ENCODE measurements at regions of chr2 and their contacts with region 1.

Region 1: GRCh38 chr2:230602562-230603230 is 109.9 kb upstream of the CAB39 start:
- DNase-seq: no peak
- ATAC-seq: no peak
- H3K4me3 ChIP-seq: no peak overlapping the region
- H3K27ac ChIP-seq: no peak overlapping the region
- H3K4me1 ChIP-seq: no peaks in the 10 kb centered on the region
- H3K27me3 ChIP-seq: no peaks in the 10 kb centered on the region
- CTCF ChIP-seq: no peak
- POLR2A ChIP-seq: no peak

Region 2: GRCh38 chr2:229780856-229781773 is 821.6 kb before region 1 on chr2:
- in situ Hi-C with region 1: loop called in 1 of 4 experiments (anchors 25 kb)
- intact Hi-C with region 1: no loop called
- DNase-seq: no peak
- ATAC-seq: peak; percentile 57 to 75
- H3K4me3 ChIP-seq: no peak overlapping the region
- H3K27ac ChIP-seq: no peak overlapping the region
- H3K4me1 ChIP-seq: peaks cover 10 to 11% of the 10 kb centered on the region in 2 donors
- H3K27me3 ChIP-seq: no peaks in the 10 kb centered on the region
- CTCF ChIP-seq: peak; percentile 56 to 89 (median 69)
- POLR2A ChIP-seq: no peak

Region 3: DNA sequence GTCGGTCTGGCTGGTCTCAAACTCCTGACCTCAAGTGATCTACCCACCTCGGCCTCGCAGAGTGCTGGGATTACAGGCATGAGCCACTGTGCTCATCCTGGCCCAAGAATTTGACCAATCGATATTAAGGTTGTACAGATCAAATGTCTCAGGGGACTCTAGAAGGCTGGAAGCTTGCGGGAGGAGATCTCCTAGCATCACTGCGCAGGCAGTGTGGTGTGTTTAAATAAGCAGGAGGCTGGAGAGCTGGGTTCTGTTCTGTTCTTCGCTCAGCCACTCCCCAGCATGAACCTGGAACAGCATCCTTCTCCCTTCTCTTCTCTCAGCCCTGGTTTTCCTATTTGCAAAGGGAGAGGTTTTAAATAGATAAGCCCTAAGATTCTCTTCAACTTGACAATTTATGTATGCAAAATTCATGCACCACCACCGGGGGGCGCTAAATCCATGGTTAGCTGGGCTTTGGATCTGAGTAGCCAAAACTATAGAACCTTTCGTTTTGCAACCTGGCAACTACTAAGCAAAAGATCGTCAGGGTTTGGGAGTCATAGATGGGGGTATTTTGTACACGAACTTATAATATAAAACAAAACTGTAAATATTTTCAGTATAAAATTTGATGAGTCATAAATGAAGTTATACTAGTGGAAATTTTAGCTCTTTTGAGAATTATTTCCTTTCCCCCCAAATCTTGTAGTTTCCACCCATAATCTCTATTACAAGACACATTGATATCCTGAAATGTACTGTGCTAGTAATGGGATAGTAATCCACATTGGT is 594.6 kb before region 1 on chr2:
- in situ Hi-C with region 1: loop called in 2 of 4 experiments (anchors 10 to 25 kb)
- intact Hi-C with region 1: no loop called
- DNase-seq: peak; percentile 17 to 50
- ATAC-seq: peak; percentile 24 to 42
- H3K4me3 ChIP-seq: peak overlapping the region in 2 of 4 donors; percentile 15 to 22
- H3K27ac ChIP-seq: no peak overlapping the region
- H3K4me1 ChIP-seq: peaks cover 0 to 6% of the 10 kb centered on the region in 2 donors
- H3K27me3 ChIP-seq: no peaks in the 10 kb centered on the region
- CTCF ChIP-seq: peak; percentile 53 to 77 (median 65)
- POLR2A ChIP-seq: no peak

Region 4: DNA sequence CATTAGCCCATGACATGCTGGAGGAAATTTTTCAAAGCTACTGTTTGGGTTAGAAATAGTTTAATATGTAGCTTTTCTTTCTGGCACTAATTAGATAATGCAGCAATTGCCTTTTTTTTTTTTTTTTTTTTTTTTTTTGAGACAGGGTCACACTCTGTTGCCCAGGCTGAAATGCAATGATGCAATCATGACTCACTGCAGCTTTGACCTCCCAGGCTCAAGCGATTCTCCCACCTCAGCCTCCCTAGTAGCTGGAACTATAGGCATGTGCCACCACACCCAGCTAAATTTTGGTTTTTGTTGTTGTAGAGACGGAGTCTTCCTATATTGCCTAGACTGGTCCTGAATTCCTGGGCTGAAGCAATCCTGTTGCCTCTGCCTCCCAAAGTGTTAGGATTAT is 50.5 kb before region 1 on chr2:
- in situ Hi-C with region 1: no loop called
- intact Hi-C with region 1: no loop called
- DNase-seq: no peak
- ATAC-seq: no peak
- H3K4me3 ChIP-seq: no peak overlapping the region
- H3K27ac ChIP-seq: no peak overlapping the region
- H3K4me1 ChIP-seq: no peaks in the 10 kb centered on the region
- H3K27me3 ChIP-seq: no peaks in the 10 kb centered on the region
- CTCF ChIP-seq: no peak
- POLR2A ChIP-seq: no peak

Measured in gastrocnemius medialis (tissue), 4 donors.